ENCODE measurements at regions of chr15 and their contacts with region 1.

Region 1: GRCh38 chr15:99333413-99333812 is 82.1 kb downstream of the LRRC28 start:
- DNase-seq: no peak
- H3K4me3 ChIP-seq: no peak overlapping the region
- H3K27ac ChIP-seq: no peak overlapping the region
- H3K4me1 ChIP-seq: no peaks in the 10 kb centered on the region
- H3K27me3 ChIP-seq: no peaks in the 10 kb centered on the region
- CTCF ChIP-seq: no peak

Region 2: GRCh38 chr15:99296386-99296785 is 37.0 kb before region 1 on chr15:
- intact Hi-C with region 1: loop called (anchors 5 kb)
- DNase-seq: no peak
- H3K4me3 ChIP-seq: no peak overlapping the region
- H3K27ac ChIP-seq: peak overlapping the region; percentile 55 to 57
- H3K4me1 ChIP-seq: peaks cover 0 to 20% of the 10 kb centered on the region in 2 donors
- H3K27me3 ChIP-seq: no peaks in the 10 kb centered on the region
- CTCF ChIP-seq: no peak

Measured in ascending aorta (tissue), 2 donors.